ENCODE measurements at regions of chr1 and their contacts with region 1.

Region 1: DNA sequence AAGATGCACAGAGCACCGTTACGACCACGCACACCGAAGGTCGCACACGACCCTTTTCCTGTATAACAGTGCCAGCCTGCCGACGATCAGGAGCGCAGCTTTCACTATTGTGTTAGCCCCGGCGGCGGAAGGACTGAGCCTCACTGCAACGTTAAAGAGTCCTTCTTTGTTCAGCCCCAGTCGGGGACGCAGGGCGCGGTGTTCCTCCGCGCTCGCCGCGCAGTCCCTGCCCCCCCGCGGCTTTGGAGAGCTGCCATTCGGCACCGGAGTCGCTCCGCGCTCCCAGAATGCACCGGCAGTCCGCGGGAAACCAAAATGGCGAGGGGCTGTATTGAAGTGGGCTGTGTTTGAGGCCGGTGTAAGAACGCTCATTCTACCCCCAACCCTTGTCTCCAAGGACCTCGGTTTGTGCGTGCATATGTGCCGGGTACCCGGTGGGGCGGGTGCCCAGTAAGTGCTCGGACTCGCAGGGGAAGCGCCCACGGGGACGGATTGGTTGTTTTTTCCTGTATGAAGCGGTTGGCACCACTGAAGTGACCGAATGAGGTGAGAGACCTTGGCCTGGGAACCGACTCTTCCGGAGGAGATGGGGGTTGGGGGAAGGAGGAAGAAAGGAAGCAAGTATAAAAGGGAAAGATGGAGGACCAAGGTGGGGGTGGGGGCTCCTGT is at the start of gene MTF2:
- DNase-seq: peak; percentile 91 to 98
- H3K4me3 ChIP-seq: peak within 1 kb of the TSS; percentile 82 to 100 (median 98)
- H3K27ac ChIP-seq: peak within 1 kb of the TSS; percentile 97
- H3K4me1 ChIP-seq: no peaks in the 10 kb centered on the region; a peak in 2 of 7 replicates
- H3K27me3 ChIP-seq: no peaks in the 10 kb centered on the region
- CTCF ChIP-seq: peak in 1 of 3 experiments; percentile 19; a peak in 1 of 4 replicates
- EP300 ChIP-seq: peak; percentile 21 to 96
- POLR2A ChIP-seq: peak; percentile 96 to 98
- RAD21 ChIP-seq: peak; percentile 22 to 24; a peak in 1 of 4 replicates
- total RNA-seq, gene MTF2: 101 and 102 TPM in 2 replicates

Region 2: DNA sequence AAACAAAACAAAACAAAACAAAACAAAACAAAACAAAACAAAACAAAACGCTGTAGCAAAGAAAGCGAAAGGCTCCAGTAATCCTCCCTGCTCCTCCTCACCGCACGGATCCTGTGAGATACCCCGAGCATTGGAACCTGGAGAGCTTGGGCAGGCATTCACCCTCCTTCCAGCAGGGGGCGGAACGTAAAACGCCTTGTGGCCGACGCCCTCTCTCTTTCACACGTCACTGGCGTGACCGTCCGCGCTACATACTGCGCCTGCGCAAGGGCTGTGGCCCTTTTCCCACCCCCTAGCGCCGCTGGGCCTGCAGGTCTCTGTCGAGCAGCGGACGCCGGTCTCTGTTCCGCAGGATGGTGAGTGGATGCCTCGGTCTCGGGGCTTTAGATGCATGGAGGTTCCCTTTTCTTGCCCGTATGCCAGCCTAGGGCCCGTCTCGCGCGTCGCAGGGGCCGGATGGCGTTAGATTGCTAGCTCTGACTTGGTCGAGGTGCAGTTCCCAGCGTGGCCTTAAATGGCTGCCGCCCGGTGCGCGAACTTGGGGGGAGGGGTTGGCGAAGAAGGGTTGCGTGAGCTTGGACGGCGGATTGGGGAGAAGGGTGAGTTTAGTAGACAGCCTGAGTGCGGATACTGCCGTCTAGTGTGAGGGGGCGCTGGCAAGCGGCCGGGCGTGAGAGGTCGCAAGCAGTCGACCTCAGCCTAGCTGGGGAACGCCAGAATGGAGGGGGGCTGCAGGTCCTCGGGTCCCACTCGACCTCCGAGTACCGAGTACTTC is 247.2 kb before region 1 on chr1 and contains the start of gene RPL5:
- CTCF ChIA-PET with region 1: no interaction called
- POLR2A ChIA-PET with region 1: interaction called, 29 read pairs
- DNase-seq: peak; percentile 95 to 99
- H3K4me3 ChIP-seq: peak within 1 kb of the TSS; percentile 98 to 100 (median 100)
- H3K27ac ChIP-seq: peak within 1 kb of the TSS; percentile 99
- H3K4me1 ChIP-seq: peaks cover 0 to 6% (median 3%) of the 10 kb centered on the region in 4 experiments; a peak in 4 of 7 replicates
- H3K27me3 ChIP-seq: no peaks in the 10 kb centered on the region; a peak in 1 of 7 replicates
- CTCF ChIP-seq: peak; percentile 86 to 98 (median 94)
- EP300 ChIP-seq: no peak
- POLR2A ChIP-seq: peak; percentile 99
- RAD21 ChIP-seq: peak; percentile 21 to 30; a peak in 2 of 4 replicates
- total RNA-seq, gene RPL5: 1,464 and 1,506 TPM in 2 replicates

Region 3: DNA sequence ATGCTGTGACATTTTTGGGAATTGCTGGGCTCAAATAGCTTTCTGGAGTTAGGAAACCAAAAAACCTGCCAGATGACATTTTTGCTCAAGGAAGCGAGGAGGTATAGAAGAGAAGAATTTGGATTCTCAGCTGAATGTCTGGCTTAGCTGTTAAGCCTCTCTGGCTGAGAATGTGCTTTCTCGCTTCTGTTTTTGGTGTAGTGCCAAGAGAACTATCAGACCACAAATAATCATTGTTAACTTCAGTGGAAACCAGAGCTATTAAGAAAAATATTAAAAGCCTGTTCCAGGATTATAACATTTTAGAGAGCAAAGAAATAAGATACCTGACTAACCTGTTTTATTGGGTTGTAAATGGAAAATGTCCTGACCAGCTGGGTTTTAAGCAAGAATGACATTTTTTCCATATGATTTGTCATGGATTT is 78.4 kb before region 1 on chr1:
- CTCF ChIA-PET with region 1: no interaction called
- POLR2A ChIA-PET with region 1: interaction called, 18 read pairs
- DNase-seq: no peak
- H3K4me3 ChIP-seq: peak overlapping the region in 1 of 4 experiments; percentile 20; a peak in 1 of 8 replicates
- H3K27ac ChIP-seq: no peak overlapping the region
- H3K4me1 ChIP-seq: peaks cover 0 to 8% (median 5%) of the 10 kb centered on the region in 4 experiments; a peak in 3 of 7 replicates
- H3K27me3 ChIP-seq: no peaks in the 10 kb centered on the region
- CTCF ChIP-seq: no peak
- EP300 ChIP-seq: no peak
- POLR2A ChIP-seq: no peak
- RAD21 ChIP-seq: no peak

Region 4: GRCh38 chr1:93033785-93034184 is 45.3 kb before region 1 on chr1:
- CTCF ChIA-PET with region 1: interaction called, 3 read pairs
- POLR2A ChIA-PET with region 1: interaction called, 11 read pairs
- DNase-seq: no peak
- H3K4me3 ChIP-seq: no peak overlapping the region
- H3K27ac ChIP-seq: no peak overlapping the region
- H3K4me1 ChIP-seq: peaks cover 0 to 2% (median 0%) of the 10 kb centered on the region in 4 experiments; a peak in 1 of 7 replicates
- H3K27me3 ChIP-seq: no peaks in the 10 kb centered on the region
- CTCF ChIP-seq: no peak
- EP300 ChIP-seq: no peak
- POLR2A ChIP-seq: no peak
- RAD21 ChIP-seq: no peak

Region 5: DNA sequence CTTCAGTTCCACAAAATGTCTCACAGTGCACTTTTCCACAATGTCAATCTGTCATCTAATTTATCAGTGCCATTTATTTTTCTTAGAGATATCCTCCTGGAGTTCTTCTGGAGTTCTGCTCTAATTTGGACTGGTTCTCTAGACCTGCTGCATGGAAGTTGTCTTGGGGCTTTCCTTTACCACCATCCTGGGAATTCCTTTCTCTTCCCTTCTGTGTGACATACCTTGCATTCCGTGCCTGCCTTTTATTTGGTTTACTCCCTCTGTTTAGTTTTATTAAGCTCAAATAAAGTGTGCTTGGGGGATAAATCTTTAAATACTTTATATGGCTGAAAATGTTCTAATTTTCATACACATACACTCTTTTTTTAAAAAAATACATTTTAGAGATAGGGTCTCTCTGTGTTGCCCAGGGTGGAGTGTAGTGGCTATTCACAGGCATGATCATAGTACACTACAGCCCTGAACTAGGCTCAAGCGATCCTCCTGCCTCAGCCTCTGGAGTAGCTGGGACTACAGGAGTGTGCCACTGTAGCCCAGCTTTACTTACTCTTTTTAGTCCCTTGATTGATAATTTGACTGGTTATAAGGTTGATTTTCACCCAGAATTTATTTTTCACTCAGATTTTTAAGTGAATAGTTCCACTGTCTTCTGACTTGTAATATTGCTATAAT is 14.3 kb after region 1 on chr1:
- CTCF ChIA-PET with region 1: interaction called, 5 read pairs
- POLR2A ChIA-PET with region 1: interaction called, 41 read pairs
- DNase-seq: no peak
- H3K4me3 ChIP-seq: no peak overlapping the region
- H3K27ac ChIP-seq: no peak overlapping the region
- H3K4me1 ChIP-seq: peaks cover 0 to 6% (median under 1%) of the 10 kb centered on the region in 4 experiments; a peak in 3 of 7 replicates
- H3K27me3 ChIP-seq: no peaks in the 10 kb centered on the region
- CTCF ChIP-seq: no peak
- EP300 ChIP-seq: no peak
- POLR2A ChIP-seq: no peak
- RAD21 ChIP-seq: no peak

Region 6: DNA sequence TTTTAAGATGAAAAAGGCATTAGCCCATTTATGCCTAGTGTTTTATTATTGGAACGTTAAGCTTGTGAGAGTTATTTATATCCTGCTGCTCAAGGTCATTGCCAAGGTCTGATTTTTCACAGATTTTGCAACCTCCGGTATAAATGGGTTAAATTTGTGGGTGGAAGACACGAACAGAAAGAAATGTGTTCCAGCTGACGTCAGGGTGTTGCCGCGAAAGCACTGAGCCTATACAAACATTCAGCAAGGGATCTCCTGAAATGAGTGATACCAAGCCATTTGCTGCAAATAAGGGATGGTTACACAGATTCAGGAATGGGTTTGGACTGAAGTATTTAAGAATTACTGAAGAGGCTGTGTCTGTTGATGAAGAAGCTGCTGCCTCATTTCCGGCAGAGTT is 68.9 kb after region 1 on chr1:
- CTCF ChIA-PET with region 1: no interaction called
- POLR2A ChIA-PET with region 1: interaction called, 11 read pairs
- DNase-seq: no peak
- H3K4me3 ChIP-seq: no peak overlapping the region
- H3K27ac ChIP-seq: 0 out of 2 replicates have a peak overlapping the region, but pooled peaks have one; percentile 8
- H3K4me1 ChIP-seq: no peaks in the 10 kb centered on the region
- H3K27me3 ChIP-seq: no peaks in the 10 kb centered on the region
- CTCF ChIP-seq: no peak
- EP300 ChIP-seq: no peak
- POLR2A ChIP-seq: no peak
- RAD21 ChIP-seq: no peak

Region 7: GRCh38 chr1:93576346-93576745 is 497.2 kb after region 1 on chr1:
- CTCF ChIA-PET with region 1: no interaction called
- POLR2A ChIA-PET with region 1: no interaction called
- DNase-seq: peak in 1 of 2 experiments; percentile 28
- H3K4me3 ChIP-seq: no peak overlapping the region
- H3K27ac ChIP-seq: no peak overlapping the region
- H3K4me1 ChIP-seq: no peaks in the 10 kb centered on the region
- H3K27me3 ChIP-seq: no peaks in the 10 kb centered on the region; a peak in 1 of 7 replicates
- CTCF ChIP-seq: no peak
- EP300 ChIP-seq: no peak
- POLR2A ChIP-seq: no peak
- RAD21 ChIP-seq: no peak

Measured in H1 (cell line).